ENCODE measurements at regions of chr22 and their contacts with region 1.

Region 1: DNA sequence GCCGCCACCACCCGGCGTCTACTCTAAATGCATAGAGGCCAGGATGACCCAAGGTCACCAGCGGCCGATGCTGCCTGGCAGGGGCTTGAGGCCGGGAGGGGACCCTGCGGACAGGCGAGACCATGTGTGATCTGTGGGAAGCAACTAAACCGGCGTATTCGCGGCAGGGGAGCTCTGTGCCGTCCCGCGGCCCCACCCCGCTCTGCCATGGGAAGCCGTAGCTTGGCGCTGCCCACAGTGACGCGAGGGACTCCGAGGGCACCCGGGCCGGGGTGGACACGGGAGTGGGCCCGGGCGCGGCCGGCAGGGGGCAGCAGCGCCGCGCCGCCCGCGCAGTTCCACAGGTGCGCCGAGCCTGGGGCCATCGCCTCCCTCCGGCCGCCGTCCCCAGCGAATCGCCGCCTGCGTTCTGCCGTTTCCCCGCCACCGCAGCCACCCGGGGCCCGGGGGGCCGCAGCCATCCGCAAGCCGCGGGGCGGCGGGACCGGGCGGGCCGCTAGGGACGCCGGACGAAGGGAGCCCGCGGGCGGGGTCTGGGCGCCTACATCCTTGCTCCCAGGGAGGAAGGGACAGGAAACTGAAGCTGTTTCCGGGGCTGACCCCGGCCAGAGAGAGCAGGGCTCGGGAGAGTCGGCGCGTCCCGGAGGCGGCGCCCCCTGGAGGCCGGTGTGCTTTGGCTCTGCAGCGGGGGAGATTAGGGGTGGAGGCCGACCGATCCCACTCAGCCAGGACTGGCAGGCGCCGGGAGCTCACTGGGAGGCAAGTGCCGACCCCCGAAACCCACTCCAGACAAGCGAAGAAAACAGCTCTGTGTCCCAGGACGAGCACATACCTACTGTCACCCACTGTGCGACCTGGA is 12.5 kb upstream of the HDHD5 start:
- DNase-seq: peak; percentile 97

Region 2: DNA sequence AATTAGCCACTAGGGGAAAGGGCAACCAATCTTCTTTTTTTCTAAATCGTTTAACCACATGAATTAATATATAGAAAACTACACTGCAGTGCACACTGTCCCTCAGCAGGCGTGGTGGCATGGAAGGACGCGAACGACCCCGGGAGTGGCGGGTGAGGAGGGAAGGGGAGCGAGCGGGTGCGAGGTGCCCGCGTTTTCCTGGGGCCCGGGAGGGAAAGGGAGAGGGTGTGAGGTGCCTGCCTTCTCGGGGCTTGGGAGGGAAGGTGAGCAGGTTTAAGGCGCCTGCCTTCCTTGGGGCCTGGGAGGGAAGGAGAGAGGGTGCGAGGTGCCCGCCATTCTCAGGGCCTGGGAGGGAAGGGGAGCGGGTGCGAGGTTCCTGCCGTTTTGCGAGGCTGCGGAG is 164.3 kb before region 1 on chr22:
- intact Hi-C with region 1: no loop called
- DNase-seq: no peak

Region 3: DNA sequence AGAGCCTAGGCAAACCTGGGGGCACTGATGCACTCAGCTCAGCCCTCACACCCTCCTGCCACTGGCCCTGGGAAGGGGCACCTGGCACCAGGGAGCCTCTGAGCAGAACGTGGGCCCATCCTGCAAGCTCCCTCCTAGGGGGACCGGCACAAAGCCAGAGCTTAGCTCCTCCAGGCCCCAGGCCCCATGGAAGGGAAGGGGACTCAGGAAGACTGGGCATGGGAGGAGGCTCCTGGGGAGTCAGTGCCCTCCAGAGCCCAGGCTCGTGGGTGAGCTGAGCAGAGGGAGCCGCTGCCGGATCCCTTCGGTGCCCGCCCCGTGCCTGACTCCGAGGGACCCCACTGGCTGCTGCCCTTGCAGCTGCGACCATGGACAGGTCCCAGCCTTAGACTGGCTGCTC is 19.2 kb after region 1 on chr22:
- intact Hi-C with region 1: loop called in 1 of 2 experiments (anchors 1 kb)
- DNase-seq: no peak